Right ventricle myocardium inferior (tissue), 1 donor: ENCODE measurements at regions of chr5 and their contacts with region 1.

Region 1: GRCh38 chr5:175657593-175658271 is at the start of gene HRH2:
- DNase-seq: peak; percentile 86
- ATAC-seq: peak; percentile 63
- total RNA-seq, gene HRH2: 46.6 TPM

Region 2: DNA sequence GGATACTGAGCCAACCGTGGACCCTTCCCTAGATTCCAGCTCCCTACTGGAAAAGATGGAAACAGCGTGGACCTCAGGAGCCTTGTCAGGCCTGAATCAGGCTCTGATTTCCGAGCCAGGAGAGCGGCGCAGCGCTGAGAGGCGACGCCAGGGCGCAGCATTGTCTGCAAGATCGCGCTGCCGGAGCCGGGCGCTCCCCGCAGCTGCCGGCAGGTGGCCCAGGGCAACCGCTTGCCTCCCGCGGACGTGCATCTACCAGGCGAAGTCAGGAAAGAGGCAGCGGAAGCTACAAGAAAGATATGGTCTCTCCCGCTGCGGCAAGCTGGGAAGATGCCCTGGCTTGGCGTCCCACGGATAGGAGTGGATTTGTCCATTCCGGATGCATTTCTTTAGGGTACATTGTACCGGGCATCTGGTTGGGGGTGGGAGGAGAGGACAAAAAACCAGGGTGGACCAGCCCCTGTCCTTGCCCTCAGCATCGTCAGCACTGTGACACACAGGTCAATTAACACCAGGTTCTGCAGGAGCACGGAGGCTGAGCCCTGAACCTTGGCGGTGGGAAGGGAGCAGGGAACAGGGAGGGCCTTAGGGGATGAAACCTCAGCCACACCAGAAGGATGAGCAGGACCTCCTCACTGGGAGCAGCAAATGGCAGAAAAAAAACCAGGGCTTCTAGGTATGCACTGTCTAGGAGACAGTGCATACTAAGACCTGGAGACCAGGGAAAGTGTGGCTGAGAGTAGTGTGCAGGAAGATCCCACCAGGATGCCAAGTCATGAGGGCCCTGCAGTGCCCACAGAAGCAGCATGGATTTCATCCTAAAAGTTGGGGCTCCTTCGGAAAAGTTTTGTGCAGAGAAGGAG is 123.4 kb before region 1 on chr5:
- intact Hi-C with region 1: loop called (anchors 2 kb)
- DNase-seq: peak; percentile 94
- ATAC-seq: peak; percentile 95

Region 3: DNA sequence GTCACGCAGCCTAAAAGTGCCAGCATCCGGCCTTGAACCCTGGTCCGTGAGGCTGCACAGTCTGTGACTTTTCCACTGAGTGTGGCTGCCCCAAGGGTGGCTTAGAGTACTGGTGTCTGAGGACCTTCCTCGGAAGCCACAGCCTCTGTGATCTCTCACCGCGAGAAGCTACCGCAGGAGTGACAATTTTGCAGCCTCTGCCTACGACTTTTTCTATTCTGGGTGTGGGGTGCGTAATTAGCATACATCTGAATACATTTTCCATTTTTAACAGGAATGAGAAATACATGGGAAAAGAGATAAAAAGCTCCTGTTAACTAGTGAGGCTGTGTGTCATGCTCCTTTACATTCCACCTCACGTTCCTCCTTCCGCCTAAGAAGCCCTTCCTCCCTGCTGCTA is 48.2 kb before region 1 on chr5:
- intact Hi-C with region 1: loop called (anchors 5 kb)
- DNase-seq: no peak
- ATAC-seq: no peak

Region 4: DNA sequence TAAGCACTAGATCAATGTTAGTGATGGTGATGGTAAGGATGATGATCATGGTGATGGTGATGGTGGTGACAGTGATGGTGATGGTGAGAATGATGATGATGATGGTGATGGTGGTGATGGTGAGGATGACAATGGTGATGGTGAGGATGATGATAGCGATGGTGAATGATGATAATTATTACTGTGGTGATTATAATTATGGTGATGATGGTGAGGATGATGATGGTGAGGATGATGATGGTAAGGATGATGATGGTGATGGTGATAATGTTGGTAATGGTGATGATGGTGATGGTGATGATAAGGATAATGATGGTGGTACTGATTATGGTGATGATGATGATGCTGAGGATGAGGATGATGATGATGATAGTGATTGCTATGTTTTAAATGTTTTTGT is 37.2 kb before region 1 on chr5:
- intact Hi-C with region 1: no loop called
- DNase-seq: no peak
- ATAC-seq: no peak

Region 5: DNA sequence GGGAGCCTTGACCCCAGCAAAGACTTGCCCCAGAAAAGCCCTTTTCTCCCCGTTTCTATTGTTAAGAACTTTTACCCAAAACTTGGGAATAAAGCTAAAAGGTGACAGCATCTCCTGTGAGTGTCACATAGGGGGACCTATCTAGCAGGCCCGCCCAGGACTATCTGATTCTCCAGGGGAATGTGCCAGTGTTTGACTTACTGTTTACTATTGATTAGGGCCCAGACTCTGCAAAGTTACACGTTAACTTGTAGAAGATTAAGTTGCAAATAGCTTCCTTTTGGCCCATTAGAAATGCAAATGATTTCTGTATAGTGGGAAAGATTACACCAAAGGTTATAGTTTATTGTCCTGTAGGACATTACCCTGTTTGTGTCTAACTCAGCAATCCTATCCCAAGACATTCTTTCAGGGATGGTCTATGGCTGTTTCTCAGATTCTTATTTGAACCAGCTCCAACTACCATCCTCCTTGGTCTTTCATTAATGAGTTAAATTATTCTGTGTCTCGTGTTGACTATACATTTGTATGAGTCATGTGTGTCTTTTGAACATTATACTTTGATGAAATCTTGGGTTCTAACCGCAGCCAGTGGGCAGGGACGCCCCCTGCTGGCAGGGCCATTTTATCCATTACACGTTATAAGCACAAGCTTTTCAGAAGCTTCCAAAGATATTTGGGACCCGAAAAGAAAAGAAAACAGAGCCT is 60.8 kb after region 1 on chr5:
- intact Hi-C with region 1: loop called (anchors 5 kb)
- DNase-seq: peak; percentile 85
- ATAC-seq: no peak